Transverse colon (tissue), 4 donors: ENCODE measurements at regions of chr4 and their contacts with region 1.

Region 1: DNA sequence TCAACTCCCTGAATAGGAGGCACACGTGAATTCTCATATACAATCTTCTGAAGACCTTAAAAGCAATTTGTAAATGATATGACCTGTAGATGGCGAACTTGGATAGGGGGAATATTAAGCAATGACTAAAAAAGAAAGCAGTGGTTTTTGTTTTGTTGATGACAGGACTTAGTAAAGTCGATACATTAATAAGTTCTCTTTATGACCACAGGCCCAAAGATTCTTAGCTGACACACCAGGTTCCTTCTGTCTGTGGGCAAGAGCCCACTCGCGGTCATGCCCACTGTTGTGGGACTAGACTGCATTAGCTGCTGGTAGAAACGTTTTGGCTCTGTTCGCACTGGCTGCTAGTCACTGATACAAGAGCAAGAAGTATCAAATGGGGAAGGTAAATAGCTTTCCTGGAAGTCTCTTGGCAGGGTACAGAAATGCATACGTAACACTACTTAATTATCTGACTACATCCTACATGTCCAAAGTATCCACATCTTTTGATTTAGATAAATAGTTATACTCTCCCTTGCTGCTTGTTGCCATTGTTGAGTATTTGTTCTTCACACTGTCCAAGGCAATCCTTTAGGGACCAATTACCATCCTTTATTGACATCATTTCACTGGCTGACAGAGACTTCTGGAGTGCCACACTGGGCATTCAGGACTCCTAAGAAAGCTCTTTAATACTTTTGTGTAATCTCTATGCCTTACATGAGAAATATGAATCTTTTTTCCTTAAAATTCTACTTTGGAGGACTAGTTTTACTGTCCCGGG is 31.0 kb downstream of the ALPK1 start:
- DNase-seq: no peak
- H3K4me3 ChIP-seq: no peak overlapping the region
- H3K27ac ChIP-seq: no peak overlapping the region
- H3K4me1 ChIP-seq: no peaks in the 10 kb centered on the region
- H3K27me3 ChIP-seq: no peaks in the 10 kb centered on the region
- CTCF ChIP-seq: peak in 2 of 5 experiments; percentile 26
- EP300 ChIP-seq: no peak
- POLR2A ChIP-seq: no peak

Region 2: DNA sequence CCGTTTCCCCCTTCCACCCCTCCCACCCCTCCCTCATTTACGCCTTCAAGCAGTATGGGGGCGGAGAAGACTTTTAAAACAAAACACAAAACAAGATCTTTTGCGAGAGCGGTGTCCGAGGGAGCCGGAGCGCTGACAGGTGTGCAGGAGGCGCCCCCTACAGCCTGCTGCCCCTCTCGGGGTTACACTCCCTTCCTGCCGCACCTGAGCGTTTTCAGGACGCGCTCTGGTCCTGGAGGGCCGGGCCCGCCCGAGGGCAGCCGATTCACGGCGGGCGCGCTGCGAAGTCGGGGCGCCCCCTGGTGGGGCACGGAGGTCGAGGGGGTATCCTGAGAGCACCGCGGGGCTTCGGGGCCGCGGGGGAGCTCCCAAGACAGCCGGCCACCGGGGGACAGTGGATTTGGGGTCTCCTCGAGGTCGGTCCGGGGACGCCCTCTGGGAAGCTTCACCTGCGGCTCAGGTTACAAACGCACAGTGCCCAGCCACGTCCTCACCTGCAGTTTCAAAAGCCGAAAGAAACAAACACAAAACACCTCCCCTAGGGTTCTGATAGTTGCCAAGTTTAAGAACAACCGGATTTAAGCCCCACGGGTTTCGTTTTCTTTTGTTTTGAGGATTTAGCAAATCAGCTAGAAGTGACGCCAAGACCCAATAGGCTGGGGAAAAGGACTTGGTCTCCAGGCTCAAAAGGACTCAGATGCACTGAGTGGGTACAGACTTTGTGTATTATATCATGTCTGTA is 195.8 kb after region 1 on chr4:
- in situ Hi-C with region 1: loop called in 1 of 4 experiments (anchors 10 kb)
- intact Hi-C with region 1: no loop called
- DNase-seq: peak; percentile 76
- H3K4me3 ChIP-seq: peak overlapping the region in 3 of 4 donors; percentile 20 to 53 (median 27)
- H3K27ac ChIP-seq: no peak overlapping the region
- H3K4me1 ChIP-seq: peaks cover 0 to 27% (median 19%) of the 10 kb centered on the region in 4 donors
- H3K27me3 ChIP-seq: peaks cover 86% of the 10 kb centered on the region
- CTCF ChIP-seq: peak; percentile 55 to 69 (median 60)
- EP300 ChIP-seq: no peak
- POLR2A ChIP-seq: no peak

Region 3: DNA sequence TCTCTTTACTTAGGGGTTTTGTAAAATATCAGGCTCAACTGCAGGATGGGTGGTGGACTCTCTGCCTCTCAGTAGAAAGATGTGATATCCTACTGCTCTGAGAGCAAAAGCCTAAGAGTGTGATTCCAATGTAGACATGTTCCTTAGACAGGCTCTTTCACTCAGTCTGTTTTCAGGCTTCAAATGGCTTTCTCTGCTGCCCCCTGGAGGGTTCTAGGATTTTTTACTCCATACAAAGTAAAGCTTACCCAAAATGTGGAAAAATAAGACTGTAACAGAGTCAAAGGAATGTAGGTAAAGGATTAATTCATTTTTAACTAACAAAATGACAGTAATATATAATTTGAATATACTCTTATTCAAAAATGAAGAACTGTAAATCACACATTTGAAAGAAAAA is 276.4 kb after region 1 on chr4:
- in situ Hi-C with region 1: loop called in 1 of 4 experiments (anchors 10 kb)
- intact Hi-C with region 1: no loop called
- DNase-seq: peak; percentile 22
- H3K4me3 ChIP-seq: no peak overlapping the region
- H3K27ac ChIP-seq: no peak overlapping the region
- H3K4me1 ChIP-seq: peaks cover 0 to 6% (median 0%) of the 10 kb centered on the region in 4 donors
- H3K27me3 ChIP-seq: no peaks in the 10 kb centered on the region
- CTCF ChIP-seq: peak; percentile 28 to 53 (median 43)
- EP300 ChIP-seq: no peak
- POLR2A ChIP-seq: no peak